GM10248 (cell line): ENCODE measurements at regions of chr13 and their contacts with region 1.

Region 1: DNA sequence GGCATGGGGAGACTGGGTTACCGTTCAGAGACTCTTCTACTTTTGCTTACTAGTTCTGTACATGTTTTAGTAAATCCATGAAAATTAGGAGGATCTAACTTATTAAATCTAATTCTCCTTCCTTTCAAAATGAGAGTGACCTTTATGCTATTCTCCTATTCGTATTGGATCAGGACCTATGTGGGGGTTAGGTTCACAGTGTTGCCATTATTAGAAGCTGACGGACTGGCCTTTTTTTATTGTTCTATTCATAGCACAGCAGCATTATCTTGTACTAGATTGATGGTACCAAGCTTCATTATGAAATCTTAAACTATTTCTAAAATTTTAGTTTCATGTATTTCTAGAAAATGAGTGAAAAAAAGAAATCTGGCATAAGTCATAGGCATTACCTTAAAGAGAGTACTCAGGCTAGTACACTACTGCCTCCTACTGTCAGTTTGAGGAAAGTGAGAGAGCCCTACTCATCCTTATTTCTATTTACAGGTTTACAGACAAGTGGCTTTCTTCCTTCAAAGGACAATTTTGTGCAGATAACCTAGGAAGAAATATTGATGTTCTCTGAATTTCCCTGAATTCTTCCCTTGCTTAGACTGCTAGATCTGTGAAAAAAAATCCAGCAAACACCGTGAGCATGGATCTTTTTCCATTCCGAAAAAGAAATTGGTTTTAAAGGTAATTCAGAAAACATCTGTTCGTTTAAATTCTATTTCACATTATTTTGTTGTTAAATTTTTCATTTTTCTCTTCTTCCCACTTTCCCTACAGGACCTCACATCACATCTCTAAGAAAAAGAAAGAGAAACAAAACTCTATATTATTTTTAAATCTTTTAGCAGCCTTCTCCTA is 485.5 kb downstream of the DIAPH3 start:
- DNase-seq: peak; percentile 29
- CTCF ChIP-seq: peak; percentile 60

Region 2: DNA sequence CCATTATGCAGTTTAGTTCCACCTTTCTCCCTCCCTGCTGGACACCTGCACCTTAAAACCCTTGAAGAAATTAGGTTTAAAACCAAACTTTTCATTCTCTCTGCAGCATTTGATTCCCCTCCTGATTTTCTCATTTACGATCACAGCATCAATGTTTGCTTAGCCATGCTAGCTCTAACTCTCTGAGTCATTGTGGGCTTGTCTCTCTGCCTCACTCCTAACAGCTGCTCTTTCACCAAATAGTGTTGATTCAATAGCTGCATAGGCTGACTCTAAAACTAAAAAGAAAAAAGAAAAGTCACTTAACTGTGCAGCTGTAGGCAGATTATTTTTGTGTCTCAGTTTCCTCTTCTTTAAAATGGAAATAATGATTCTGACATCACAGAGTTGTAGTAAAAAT is 639.4 kb before region 1 on chr13:
- CTCF ChIA-PET with region 1: no interaction called
- POLR2A ChIA-PET with region 1: no interaction called
- DNase-seq: no peak
- CTCF ChIP-seq: no peak

Region 3: GRCh38 chr13:59623206-59623915 is 54.8 kb before region 1 on chr13:
- CTCF ChIA-PET with region 1: no interaction called
- POLR2A ChIA-PET with region 1: no interaction called
- DNase-seq: no peak
- CTCF ChIP-seq: no peak

Region 4: GRCh38 chr13:59666504-59666903 is 11.7 kb before region 1 on chr13:
- CTCF ChIA-PET with region 1: interaction called, 48 read pairs
- POLR2A ChIA-PET with region 1: no interaction called
- DNase-seq: peak; percentile 15
- CTCF ChIP-seq: no peak

Region 5: DNA sequence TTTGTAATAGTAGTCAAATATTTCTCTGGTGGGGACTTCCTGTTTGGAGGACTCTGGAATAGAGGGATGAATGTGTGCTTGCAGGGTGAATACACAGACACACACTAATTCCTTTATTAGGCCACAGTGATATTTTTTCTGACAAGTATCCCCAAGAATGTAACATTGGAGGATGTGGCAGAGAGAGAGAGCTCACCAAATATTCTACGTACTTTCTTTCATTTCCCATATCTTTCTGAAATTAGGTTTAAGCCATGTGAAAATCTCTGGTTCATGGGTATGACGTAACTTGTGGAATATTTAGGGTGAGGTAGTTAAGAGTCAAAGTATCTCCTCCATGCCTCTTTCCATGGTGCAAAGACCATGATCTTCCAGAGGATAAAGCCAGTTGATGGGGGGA is 22.1 kb after region 1 on chr13:
- CTCF ChIA-PET with region 1: interaction called, 57 read pairs
- POLR2A ChIA-PET with region 1: no interaction called
- DNase-seq: no peak
- CTCF ChIP-seq: no peak

Region 6: DNA sequence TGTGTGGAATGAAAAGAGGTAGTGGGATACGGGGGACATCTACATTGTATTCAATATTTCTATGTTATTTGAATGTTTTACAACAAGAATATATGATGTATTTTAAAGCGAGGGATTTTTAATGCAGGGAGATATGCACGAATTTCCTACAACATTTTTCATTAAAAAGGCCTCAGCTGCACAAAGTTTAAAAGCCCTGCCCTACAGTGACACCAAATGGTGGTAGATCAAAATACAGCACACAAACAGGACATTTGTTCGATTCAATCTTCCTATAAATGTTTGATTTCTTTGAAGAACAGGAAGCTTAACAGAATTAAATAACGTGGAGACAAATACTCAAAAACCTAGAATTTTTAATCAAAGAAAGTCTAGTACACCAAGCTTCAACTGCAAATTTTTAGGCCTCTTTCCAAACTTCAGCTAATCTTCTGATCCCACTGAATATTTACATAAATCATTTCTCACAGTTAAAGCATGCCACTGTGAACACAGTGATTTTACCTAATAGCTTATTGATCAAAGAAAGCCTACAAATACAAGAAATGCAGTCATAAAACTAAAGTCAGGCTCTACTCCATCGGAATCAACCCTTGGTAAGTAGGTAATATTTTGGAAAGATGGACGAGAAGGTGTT is 228.3 kb after region 1 on chr13:
- CTCF ChIA-PET with region 1: interaction called, 25 read pairs
- POLR2A ChIA-PET with region 1: no interaction called
- DNase-seq: no peak
- CTCF ChIP-seq: peak; percentile 53

Region 7: DNA sequence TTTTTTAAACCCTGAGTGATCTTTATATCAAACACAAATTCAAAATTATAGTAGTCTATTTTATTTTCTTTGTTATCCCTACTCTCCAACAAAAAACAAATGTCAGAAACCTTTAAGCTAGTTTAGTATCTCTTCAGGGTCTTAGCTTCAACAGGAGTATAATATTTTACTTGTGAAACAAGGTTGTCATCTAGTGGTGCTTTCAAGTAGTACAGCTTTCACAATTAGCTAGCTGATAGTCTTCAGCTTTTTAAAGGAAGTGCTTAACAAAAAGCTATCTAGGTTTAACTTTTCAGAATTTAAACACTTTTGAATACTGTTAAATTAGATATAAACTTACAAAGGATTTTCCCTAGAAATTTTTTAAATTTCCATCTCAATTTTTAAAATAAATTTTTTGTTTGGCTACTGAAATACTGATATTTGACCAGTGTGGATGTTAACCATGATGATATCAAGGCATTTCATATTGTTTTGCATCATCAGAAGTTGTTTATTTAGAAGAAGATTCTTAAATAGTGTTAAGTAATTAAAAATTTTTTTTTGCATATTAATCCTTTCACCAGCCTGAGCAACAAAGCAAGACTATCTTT is 753.0 kb after region 1 on chr13:
- CTCF ChIA-PET with region 1: interaction called, 12 read pairs
- POLR2A ChIA-PET with region 1: interaction called, 3 read pairs
- DNase-seq: peak; percentile 25
- CTCF ChIP-seq: peak; percentile 78